HAP-1 (cell line): ENCODE measurements at regions of chr17 and their contacts with region 1.

Region 1: GRCh38 chr17:60421273-60421934 is 885 bp upstream of the CHCT1 start:
- DNase-seq: peak; percentile 68 to 88
- H3K4me3 ChIP-seq: peak overlapping the region; percentile 33
- H3K4me1 ChIP-seq: peaks cover 10% of the 10 kb centered on the region
- H3K27me3 ChIP-seq: no peaks in the 10 kb centered on the region

Region 2: DNA sequence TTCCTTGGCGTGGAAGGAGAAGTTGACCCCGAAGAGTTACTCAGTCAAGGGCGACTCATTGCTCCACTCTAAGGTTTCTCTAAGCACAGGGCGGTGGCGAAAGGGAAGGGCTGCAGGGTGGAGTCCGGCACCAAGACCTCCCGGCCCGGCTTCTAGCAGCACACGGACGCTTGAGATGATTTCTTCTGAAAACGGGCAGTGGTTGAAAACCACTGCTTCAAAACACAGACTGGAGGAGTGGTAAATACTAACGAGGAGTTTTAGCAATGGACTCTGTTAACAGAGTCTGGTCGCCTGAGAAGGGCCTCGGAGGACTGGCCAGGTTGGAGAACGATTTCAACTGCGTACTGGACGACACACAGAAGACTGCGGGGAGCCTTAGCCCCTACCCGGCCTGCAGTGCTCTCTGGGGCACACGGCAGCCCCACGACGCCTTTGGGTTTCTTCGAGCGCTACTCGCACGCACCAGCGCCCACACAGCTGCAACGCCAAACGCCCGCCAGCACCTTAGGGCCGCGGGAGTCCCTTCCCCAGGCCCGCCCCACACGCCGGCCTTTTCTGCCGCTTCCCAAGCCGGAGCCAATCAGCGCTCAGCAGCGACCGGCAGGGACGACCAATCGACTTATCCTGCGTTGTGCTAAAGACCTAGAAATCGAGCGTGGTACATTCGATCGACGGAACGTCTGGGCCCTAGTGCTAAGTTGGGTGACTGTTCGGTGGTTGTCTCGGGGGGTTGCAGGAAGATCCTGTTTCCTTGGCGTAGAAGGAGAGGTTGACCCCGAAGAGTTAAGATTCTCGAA is 286.1 kb before region 1 on chr17:
- in situ Hi-C with region 1: loop called (anchors 25 kb)
- DNase-seq: peak; percentile 88 to 93
- H3K4me3 ChIP-seq: peak overlapping the region; percentile 63
- H3K4me1 ChIP-seq: peaks cover 3% of the 10 kb centered on the region; the same call in 1 of the 2 replicates
- H3K27me3 ChIP-seq: no peaks in the 10 kb centered on the region; the same call in 1 of the 2 replicates

Region 3: GRCh38 chr17:60231234-60231633 is 190.2 kb before region 1 on chr17:
- in situ Hi-C with region 1: loop called (anchors 10 kb)
- DNase-seq: peak; percentile 34 to 58
- H3K4me3 ChIP-seq: no peak overlapping the region
- H3K4me1 ChIP-seq: peaks cover 7% of the 10 kb centered on the region
- H3K27me3 ChIP-seq: no peaks in the 10 kb centered on the region

Region 4: DNA sequence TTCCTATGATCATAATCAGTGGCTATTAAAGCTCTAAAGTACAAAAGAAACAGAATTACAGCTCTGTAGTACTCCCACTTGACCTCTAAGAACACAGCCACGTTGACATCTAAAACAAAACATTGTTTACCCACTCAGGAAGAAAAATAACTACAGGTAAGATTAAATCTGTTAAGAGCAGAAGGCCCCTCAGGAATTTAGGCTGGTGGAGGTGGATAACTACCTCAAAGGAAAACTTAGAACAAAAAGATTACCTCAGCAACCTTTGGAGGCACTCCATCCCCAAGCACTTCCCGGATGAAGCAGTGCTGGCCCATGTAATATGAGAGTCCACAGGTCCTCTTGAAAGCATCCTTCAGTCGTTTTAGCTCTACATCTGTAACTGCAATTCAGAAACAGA is 76.2 kb before region 1 on chr17:
- in situ Hi-C with region 1: no loop called
- DNase-seq: no peak
- H3K4me3 ChIP-seq: no peak overlapping the region
- H3K4me1 ChIP-seq: no peaks in the 10 kb centered on the region
- H3K27me3 ChIP-seq: no peaks in the 10 kb centered on the region

Region 5: DNA sequence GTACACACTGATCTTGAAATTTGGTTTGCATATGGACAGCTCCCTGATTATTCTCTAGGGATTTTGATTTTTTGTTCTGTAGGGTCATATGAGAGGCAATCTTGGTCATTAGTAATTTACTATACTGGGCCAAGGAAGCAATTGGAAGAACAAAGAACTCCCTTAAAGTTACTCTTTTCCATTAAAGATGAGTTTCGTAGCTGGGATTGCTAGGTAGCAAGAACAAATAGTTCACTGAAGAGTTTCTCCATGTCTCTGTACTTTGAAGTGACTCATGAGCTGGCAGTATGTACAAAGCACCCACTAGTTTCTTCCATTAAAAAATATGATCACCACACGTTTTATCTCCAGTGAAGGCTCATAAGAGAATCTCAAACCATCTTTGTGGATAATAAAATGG is 250.1 kb after region 1 on chr17:
- in situ Hi-C with region 1: no loop called
- DNase-seq: no peak
- H3K4me3 ChIP-seq: no peak overlapping the region
- H3K4me1 ChIP-seq: no peaks in the 10 kb centered on the region
- H3K27me3 ChIP-seq: no peaks in the 10 kb centered on the region